Activated B cell treated with CpG ODN at 0.5 μM for 24 hours (primary cell): ENCODE measurements at regions of chr9 and their contacts with region 1.

Region 1: DNA sequence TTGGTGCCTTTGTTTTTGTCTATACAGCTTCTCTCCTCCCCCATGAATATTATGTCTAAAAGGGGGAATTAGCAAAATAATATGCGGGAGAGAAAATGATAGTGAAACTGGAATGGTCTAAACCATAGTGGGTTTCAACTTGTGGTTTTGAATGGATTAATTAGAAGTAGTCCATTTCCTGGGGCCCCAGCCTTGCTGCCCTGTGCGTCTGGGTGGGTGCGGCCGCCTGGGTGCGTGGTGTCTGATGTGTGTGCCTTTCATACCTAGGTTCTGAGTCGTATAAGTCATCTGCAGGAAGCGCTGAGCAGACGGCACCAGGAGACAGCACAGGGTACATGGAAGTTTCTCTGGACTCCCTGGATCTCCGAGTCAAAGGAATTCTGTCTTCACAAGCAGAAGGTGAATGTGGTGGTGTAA is 120.0 kb upstream of the CACNA1B start:
- DNase-seq: peak; percentile 46
- ATAC-seq: peak; percentile 30
- H3K4me3 Mint-ChIP-seq: peak overlapping the region; percentile 64
- H3K27ac Mint-ChIP-seq: peak overlapping the region; percentile 99
- H3K4me1 Mint-ChIP-seq: peaks cover 65% of the 10 kb centered on the region
- H3K27me3 Mint-ChIP-seq: no peaks in the 10 kb centered on the region
- CTCF ChIP-seq: no peak

Region 2: DNA sequence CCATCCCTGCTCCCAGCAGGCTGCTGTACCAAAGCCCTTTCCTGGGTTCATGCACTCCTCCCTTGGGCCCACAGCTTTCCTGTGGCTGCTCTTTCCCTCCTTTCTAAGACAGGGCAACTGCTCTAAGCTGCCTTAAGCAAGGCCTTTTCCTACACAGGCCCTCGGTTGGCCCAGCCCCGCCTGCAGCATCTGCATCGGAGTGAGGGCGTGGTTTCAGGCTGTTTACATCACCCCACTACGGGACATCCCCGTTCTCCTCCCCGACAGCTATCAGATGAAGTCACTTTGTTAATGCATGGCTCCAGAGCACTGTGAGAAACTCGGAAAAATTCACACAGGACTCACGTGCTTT is 182.3 kb before region 1 on chr9:
- CTCF ChIA-PET with region 1: no interaction called
- POLR2A ChIA-PET with region 1: no interaction called
- intact Hi-C with region 1: no loop called
- DNase-seq: no peak
- ATAC-seq: no peak
- H3K4me3 Mint-ChIP-seq: peak overlapping the region; percentile 44
- H3K27ac Mint-ChIP-seq: peak overlapping the region; percentile 44
- H3K4me1 Mint-ChIP-seq: peaks cover 41% of the 10 kb centered on the region
- H3K27me3 Mint-ChIP-seq: no peaks in the 10 kb centered on the region
- CTCF ChIP-seq: no peak

Region 3: DNA sequence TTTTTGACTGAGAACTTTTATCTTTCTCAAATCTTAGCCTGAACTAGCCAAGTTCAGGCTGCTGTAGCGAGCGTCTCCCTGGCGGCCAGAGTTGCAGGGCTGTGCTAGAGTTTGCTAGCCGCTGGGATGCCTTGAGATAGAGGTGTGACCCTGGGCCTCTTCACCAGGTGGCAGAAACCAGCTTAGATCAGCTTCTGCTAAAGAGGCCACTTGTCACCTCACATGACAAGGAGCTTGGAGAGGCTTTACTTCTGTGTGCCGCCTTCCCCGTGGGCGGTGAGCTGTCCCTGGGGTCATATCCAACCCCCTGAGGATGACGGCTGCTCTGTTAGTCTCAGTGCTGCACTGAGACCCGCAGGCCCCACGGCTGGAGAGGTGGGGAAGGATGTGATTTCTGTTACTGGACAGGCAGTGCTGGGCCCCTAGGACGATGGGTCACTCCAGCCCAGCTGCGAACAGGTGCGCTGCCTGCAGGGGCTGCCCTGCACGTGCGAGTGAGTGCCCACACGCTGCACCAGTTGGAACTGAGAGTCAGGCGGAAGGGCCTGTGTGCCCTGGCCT is 75.1 kb before region 1 on chr9:
- CTCF ChIA-PET with region 1: no interaction called
- POLR2A ChIA-PET with region 1: interaction called, 15 read pairs
- intact Hi-C with region 1: no loop called
- DNase-seq: no peak
- ATAC-seq: peak; percentile 83
- H3K4me3 Mint-ChIP-seq: no peak overlapping the region
- H3K27ac Mint-ChIP-seq: peak overlapping the region; percentile 66
- H3K4me1 Mint-ChIP-seq: peaks cover 75% of the 10 kb centered on the region
- H3K27me3 Mint-ChIP-seq: no peaks in the 10 kb centered on the region
- CTCF ChIP-seq: no peak

Region 4: GRCh38 chr9:137721899-137722298 is 35.7 kb before region 1 on chr9:
- CTCF ChIA-PET with region 1: no interaction called
- POLR2A ChIA-PET with region 1: interaction called, 4 read pairs
- intact Hi-C with region 1: loop called (anchors 1 kb)
- DNase-seq: no peak
- ATAC-seq: no peak
- H3K4me3 Mint-ChIP-seq: no peak overlapping the region
- H3K27ac Mint-ChIP-seq: peak overlapping the region; percentile 84
- H3K4me1 Mint-ChIP-seq: peaks cover 37% of the 10 kb centered on the region
- H3K27me3 Mint-ChIP-seq: no peaks in the 10 kb centered on the region
- CTCF ChIP-seq: no peak

Region 5: GRCh38 chr9:137740312-137740711 is 17.3 kb before region 1 on chr9:
- CTCF ChIA-PET with region 1: no interaction called
- POLR2A ChIA-PET with region 1: interaction called, 103 read pairs
- intact Hi-C with region 1: loop called (anchors 1 kb)
- DNase-seq: no peak
- ATAC-seq: no peak
- H3K4me3 Mint-ChIP-seq: peak overlapping the region; percentile 41
- H3K27ac Mint-ChIP-seq: peak overlapping the region; percentile 90
- H3K4me1 Mint-ChIP-seq: peaks cover 70% of the 10 kb centered on the region
- H3K27me3 Mint-ChIP-seq: no peaks in the 10 kb centered on the region
- CTCF ChIP-seq: no peak

Region 6: DNA sequence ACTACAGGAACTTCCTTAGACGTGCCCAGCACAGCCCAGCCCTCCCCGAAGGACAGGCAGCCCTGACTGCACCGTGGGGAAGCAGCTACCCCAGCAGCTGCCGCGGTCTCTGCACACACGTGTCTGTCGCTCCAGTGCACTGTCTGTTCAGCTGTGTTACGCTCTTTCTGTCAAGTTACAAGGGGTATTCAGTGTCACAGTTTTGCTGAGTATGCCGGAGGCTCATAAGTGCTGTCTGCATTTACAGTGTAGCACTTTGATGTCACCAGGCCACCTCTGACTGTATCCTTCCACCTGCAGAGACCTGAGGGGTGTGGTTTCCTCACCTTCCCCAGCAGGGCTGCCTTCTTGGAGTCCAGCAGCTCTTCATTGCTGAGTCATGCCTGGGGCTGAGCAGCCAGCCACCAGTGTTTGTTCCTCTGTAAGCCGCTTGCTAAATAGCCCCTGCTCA is 12.1 kb before region 1 on chr9:
- CTCF ChIA-PET with region 1: no interaction called
- POLR2A ChIA-PET with region 1: interaction called, 103 read pairs
- intact Hi-C with region 1: loop called (anchors 1 kb)
- DNase-seq: peak; percentile 65
- ATAC-seq: peak; percentile 95
- H3K4me3 Mint-ChIP-seq: peak overlapping the region; percentile 60
- H3K27ac Mint-ChIP-seq: peak overlapping the region; percentile 91
- H3K4me1 Mint-ChIP-seq: peaks cover 49% of the 10 kb centered on the region
- H3K27me3 Mint-ChIP-seq: no peaks in the 10 kb centered on the region
- CTCF ChIP-seq: no peak

Region 7: GRCh38 chr9:137825324-137825989 is 67.8 kb after region 1 on chr9:
- CTCF ChIA-PET with region 1: no interaction called
- POLR2A ChIA-PET with region 1: interaction called, 3 read pairs
- intact Hi-C with region 1: loop called (anchors 1 kb)
- DNase-seq: peak; percentile 47
- ATAC-seq: peak; percentile 98
- H3K4me3 Mint-ChIP-seq: peak overlapping the region; percentile 5
- H3K27ac Mint-ChIP-seq: peak overlapping the region; percentile 38
- H3K4me1 Mint-ChIP-seq: peaks cover 27% of the 10 kb centered on the region
- H3K27me3 Mint-ChIP-seq: no peaks in the 10 kb centered on the region
- CTCF ChIP-seq: no peak